A549 (cell line): ENCODE measurements at regions of chr6 and their contacts with region 1.

Region 1: GRCh38 chr6:31580807-31581433 is 1.3 kb downstream of the LTB start:
- DNase-seq: peak; percentile 64 to 68
- ATAC-seq: peak; percentile 94 to 99
- H3K4me3 ChIP-seq: peak overlapping the region; percentile 63
- H3K27ac ChIP-seq: peak overlapping the region; percentile 73 to 94
- H3K4me1 ChIP-seq: peaks cover 6% of the 10 kb centered on the region; the same call in 1 of the 3 replicates
- CTCF ChIP-seq: peak; percentile 84
- EP300 ChIP-seq: no peak
- POLR2A ChIP-seq: peak; percentile 44
- RAD21 ChIP-seq: peak; percentile 22 to 58; a peak in 4 of 5 replicates

Region 2: GRCh38 chr6:31366693-31367470 is 214.0 kb before region 1 on chr6:
- CTCF ChIA-PET with region 1: no interaction called
- POLR2A ChIA-PET with region 1: no interaction called
- DNase-seq: peak; percentile 78 to 84
- ATAC-seq: peak; percentile 99 to 100
- H3K4me3 ChIP-seq: peak overlapping the region; percentile 40
- H3K27ac ChIP-seq: no peak overlapping the region
- H3K4me1 ChIP-seq: no peaks in the 10 kb centered on the region
- CTCF ChIP-seq: peak; percentile 84
- EP300 ChIP-seq: no peak
- POLR2A ChIP-seq: no peak
- RAD21 ChIP-seq: peak; percentile 86 to 89

Region 3: DNA sequence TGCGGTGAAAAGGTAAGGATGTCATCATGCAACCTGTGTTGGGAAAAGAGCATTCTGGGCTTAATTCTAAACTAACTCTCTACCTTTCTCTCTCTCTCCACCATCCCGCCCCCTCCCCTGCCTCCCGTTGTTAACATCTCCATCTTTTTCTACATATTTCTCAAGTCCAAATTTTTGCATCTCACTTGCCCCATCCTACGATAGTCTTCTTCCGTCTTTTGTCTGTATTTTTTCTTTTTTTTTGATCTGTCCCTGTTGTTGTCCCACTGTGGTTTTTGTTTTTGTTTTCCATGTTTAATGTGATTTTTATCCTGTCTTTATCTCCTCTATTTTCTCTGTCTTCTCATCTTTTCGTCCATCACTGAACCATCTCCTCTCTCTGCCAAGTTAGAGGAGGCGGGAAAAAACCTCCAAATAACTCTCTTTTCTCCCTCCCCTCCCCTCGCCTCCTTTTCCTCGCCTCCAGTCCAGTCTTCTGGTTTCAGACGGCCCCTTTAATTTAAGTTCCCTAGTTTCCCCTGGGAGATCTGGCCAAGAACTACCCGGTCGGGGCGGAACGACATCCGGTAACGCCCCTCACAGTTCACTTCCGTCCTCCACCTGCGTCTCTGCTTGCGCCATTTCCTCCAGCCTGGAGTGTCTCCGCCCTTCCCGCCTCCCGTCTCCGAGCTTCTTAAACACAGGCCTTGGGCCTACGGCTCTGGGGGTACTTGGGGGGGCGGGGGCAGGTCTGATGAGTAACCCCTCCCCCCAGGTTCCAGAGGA is 33.8 kb before region 1 on chr6 and contains the start of gene NFKBIL1:
- CTCF ChIA-PET with region 1: interaction called, 56 read pairs
- POLR2A ChIA-PET with region 1: interaction called, 3 read pairs
- DNase-seq: peak; percentile 85 to 97
- ATAC-seq: peak; percentile 93 to 95
- H3K4me3 ChIP-seq: peak within 1 kb of the TSS; percentile 57
- H3K27ac ChIP-seq: peak within 1 kb of the TSS; percentile 87 to 90
- H3K4me1 ChIP-seq: peaks cover 14% of the 10 kb centered on the region
- CTCF ChIP-seq: no peak
- EP300 ChIP-seq: no peak
- POLR2A ChIP-seq: no peak
- RAD21 ChIP-seq: no peak
- polyA plus RNA-seq, gene NFKBIL1: 3.8 and 5.2 TPM in 2 replicates

Region 4: DNA sequence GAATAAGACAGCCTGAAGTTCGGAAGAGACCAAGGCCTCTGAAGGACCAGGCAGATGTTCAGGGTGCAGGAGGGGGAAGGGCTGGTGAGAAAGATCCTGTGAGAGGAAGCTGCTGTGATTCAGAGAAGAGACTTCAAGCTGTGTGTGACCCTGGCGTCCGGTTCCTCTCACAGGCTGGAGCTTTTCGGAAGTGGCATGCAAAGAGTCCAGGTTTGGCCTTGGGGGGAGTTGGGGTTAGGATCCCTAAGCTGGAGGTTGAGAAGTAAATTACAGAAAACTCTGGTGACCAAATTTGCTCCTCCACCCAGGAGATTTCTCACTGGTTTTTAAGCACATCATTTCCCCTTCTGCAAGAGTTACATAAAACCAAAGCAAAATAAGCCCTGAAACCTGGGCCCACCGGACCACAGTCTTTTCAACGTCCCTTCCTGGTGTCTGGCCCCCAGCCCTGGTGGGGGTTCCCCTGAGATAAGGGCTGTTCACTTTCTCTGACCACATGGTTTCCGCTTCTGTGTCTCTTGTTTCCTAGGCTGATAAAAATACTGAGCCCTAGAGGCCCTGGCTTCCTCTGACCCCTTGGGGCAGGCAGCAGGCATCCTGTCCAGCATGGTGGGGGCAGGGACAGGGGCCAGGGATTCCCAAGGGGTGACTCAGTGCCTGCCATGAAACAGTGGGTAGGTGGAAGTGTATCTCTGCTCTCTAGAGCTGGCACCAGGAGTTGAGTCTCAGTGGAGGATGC is 20.8 kb before region 1 on chr6:
- CTCF ChIA-PET with region 1: interaction called, 10 read pairs
- POLR2A ChIA-PET with region 1: no interaction called
- DNase-seq: peak in 1 of 2 experiments; percentile 12
- ATAC-seq: peak; percentile 64 to 80; a peak in 3 of 6 replicates
- H3K4me3 ChIP-seq: no peak overlapping the region
- H3K27ac ChIP-seq: peak overlapping the region; percentile 33 to 74; a peak in 4 of 6 replicates
- H3K4me1 ChIP-seq: peaks cover 27% of the 10 kb centered on the region
- CTCF ChIP-seq: no peak
- EP300 ChIP-seq: no peak
- POLR2A ChIP-seq: no peak
- RAD21 ChIP-seq: no peak

Region 5: DNA sequence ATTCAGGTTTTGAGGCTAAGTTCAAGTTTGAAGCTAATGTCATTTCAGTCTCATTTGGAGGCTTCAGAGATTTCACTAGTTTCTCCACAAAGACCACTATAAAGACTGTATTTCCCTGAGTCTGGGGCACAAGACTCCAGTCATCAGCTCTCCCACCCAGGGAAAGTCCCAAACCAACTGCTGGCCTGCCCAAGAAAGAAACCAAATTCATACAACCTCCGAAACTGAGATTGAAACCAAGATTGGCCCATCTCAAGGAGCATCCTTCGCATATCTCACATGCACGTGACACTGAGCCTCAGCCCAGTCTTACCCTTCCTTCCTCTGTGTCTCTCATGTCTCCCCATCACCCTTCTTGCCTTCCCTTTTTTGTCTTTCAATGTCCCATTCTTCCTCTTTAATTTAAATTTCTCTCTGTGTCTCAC is 12.4 kb before region 1 on chr6:
- CTCF ChIA-PET with region 1: interaction called, 30 read pairs
- POLR2A ChIA-PET with region 1: interaction called, 4 read pairs
- DNase-seq: no peak
- ATAC-seq: no peak
- H3K4me3 ChIP-seq: no peak overlapping the region
- H3K27ac ChIP-seq: no peak overlapping the region
- H3K4me1 ChIP-seq: no peaks in the 10 kb centered on the region
- CTCF ChIP-seq: no peak
- EP300 ChIP-seq: no peak
- POLR2A ChIP-seq: no peak
- RAD21 ChIP-seq: no peak

Region 6: DNA sequence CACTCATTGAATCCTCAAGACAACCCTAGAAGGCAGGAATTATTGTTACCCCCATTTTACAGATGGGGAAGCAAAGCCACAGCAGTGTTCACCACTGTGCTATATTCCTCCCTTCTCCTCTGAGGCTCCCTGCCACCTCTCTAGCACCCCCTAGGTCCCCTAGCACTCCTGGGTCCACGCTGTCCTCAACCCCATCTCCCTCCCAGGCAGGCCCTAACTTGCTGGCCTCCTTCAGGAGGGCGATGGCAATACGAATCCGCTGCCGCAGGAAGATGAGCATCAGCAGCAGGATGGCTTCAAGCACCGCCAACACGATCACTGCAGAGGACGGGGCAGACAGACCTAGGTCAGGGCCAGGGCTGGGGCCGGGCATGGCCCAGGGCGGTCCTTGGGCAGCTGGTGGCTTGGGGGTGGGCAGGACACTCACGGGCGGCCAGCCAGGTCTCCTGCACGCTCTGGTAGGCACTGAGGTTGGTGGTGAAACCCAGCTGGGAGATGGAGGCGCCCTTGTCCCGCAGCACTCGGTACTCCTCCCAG is 289.5 kb after region 1 on chr6:
- CTCF ChIA-PET with region 1: no interaction called
- POLR2A ChIA-PET with region 1: no interaction called
- DNase-seq: no peak
- ATAC-seq: peak; percentile 55 to 68; a peak in 4 of 6 replicates
- H3K4me3 ChIP-seq: no peak overlapping the region
- H3K27ac ChIP-seq: no peak overlapping the region
- H3K4me1 ChIP-seq: no peaks in the 10 kb centered on the region
- CTCF ChIP-seq: no peak
- EP300 ChIP-seq: no peak
- POLR2A ChIP-seq: no peak
- RAD21 ChIP-seq: 0 out of 5 replicates have a peak, but pooled peaks of 1 of the 2 experiments have one; percentile 4